CD14-positive monocyte (primary cell): ENCODE measurements at regions of chr1 and their contacts with region 1.

Region 1: DNA sequence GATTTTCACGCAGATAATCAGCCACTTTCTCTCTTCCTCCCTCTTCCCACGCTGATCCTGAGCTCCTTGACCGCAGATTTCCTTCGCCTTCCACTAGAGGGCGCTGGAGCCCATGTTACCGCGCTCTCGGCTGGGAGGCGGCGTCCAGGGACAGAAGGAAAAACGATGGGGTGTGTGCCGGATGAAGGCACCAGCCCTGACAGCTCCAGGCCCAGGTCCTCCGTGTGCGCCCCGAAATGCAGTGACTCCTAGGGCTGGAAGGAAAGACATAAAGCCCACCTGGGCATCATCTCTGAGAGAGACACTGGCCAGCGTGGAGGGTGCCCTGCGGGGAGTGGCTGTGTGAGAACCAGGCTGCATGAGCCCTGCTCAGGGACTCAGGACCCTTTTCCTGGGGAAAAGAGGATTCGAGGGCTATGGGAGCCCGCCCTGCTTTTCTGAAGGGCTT is 44.9 kb upstream of the CYP2J2 start:
- DNase-seq: peak; percentile 23 to 33 (median 32)
- H3K4me3 ChIP-seq: no peak overlapping the region
- H3K4me3 Mint-ChIP-seq: peak overlapping the region in 1 of 2 donors; percentile 56
- H3K27ac ChIP-seq: no peak overlapping the region
- H3K27ac Mint-ChIP-seq: peak overlapping the region in 1 of 7 donors; percentile 25
- H3K4me1 ChIP-seq: peaks cover 0 to 5% of the 10 kb centered on the region in 2 donors
- H3K4me1 Mint-ChIP-seq: peaks cover 6% of the 10 kb centered on the region
- H3K27me3 ChIP-seq: peaks cover 0 to 4% of the 10 kb centered on the region in 2 donors
- H3K27me3 Mint-ChIP-seq: peaks cover 0 to 6% (median 2%) of the 10 kb centered on the region in 3 donors
- CTCF ChIP-seq: peak; percentile 91

Region 2: DNA sequence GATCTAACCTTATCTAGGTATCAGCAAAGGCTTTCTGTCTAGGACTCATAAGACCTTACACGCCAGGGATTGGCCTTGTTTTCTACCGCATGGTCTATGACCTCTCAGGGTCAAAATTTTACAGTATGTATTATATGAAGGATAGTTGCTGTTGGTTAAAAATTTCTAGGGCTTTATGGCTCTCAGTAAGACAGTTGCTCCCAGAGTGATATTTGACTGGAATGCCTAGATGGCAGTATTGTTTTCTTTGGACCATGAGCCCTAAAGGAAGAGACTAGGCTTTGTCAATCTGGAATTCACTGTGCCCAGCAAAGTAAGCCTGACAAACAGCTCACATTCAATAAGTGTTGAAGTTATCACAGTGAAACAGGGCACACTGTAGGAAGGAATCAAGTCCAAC is 64.4 kb after region 1 on chr1:
- intact Hi-C with region 1: no loop called
- DNase-seq: no peak
- H3K4me3 ChIP-seq: no peak overlapping the region
- H3K4me3 Mint-ChIP-seq: no peak overlapping the region
- H3K27ac ChIP-seq: no peak overlapping the region
- H3K27ac Mint-ChIP-seq: no peak overlapping the region
- H3K4me1 ChIP-seq: peaks cover 4 to 10% of the 10 kb centered on the region in 2 donors
- H3K4me1 Mint-ChIP-seq: peaks cover 12% of the 10 kb centered on the region
- H3K27me3 ChIP-seq: no peaks in the 10 kb centered on the region
- H3K27me3 Mint-ChIP-seq: peaks cover 0 to 2% (median 0%) of the 10 kb centered on the region in 3 donors
- CTCF ChIP-seq: no peak

Region 3: GRCh38 chr1:61035880-61036279 is 1064.4 kb after region 1 on chr1:
- intact Hi-C with region 1: loop called (anchors 5 to 10 kb)
- DNase-seq: no peak
- H3K4me3 ChIP-seq: no peak overlapping the region
- H3K4me3 Mint-ChIP-seq: no peak overlapping the region
- H3K27ac ChIP-seq: no peak overlapping the region
- H3K27ac Mint-ChIP-seq: no peak overlapping the region
- H3K4me1 ChIP-seq: no peaks in the 10 kb centered on the region
- H3K4me1 Mint-ChIP-seq: no peaks in the 10 kb centered on the region
- H3K27me3 ChIP-seq: no peaks in the 10 kb centered on the region
- H3K27me3 Mint-ChIP-seq: peaks cover 0 to 4% (median 0%) of the 10 kb centered on the region in 3 donors
- CTCF ChIP-seq: no peak

Region 4: GRCh38 chr1:61043010-61043820 is 1071.7 kb after region 1 on chr1:
- intact Hi-C with region 1: loop called (anchors 5 to 10 kb)
- DNase-seq: peak; percentile 70 to 79 (median 75)
- H3K4me3 ChIP-seq: peak overlapping the region; percentile 40 to 75 (median 54)
- H3K4me3 Mint-ChIP-seq: peak overlapping the region; percentile 92 to 97
- H3K27ac ChIP-seq: no peak overlapping the region
- H3K27ac Mint-ChIP-seq: peak overlapping the region in 3 of 7 donors; percentile 79 to 89 (median 88)
- H3K4me1 ChIP-seq: peaks cover 5 to 13% of the 10 kb centered on the region in 2 donors
- H3K4me1 Mint-ChIP-seq: peaks cover 9% of the 10 kb centered on the region
- H3K27me3 ChIP-seq: peaks cover 5 to 23% of the 10 kb centered on the region in 2 donors
- H3K27me3 Mint-ChIP-seq: peaks cover 21 to 23% (median 21%) of the 10 kb centered on the region in 3 donors
- CTCF ChIP-seq: peak; percentile 84